PC-3 (cell line): ENCODE measurements at regions of chr17 and their contacts with region 1.

Region 1: DNA sequence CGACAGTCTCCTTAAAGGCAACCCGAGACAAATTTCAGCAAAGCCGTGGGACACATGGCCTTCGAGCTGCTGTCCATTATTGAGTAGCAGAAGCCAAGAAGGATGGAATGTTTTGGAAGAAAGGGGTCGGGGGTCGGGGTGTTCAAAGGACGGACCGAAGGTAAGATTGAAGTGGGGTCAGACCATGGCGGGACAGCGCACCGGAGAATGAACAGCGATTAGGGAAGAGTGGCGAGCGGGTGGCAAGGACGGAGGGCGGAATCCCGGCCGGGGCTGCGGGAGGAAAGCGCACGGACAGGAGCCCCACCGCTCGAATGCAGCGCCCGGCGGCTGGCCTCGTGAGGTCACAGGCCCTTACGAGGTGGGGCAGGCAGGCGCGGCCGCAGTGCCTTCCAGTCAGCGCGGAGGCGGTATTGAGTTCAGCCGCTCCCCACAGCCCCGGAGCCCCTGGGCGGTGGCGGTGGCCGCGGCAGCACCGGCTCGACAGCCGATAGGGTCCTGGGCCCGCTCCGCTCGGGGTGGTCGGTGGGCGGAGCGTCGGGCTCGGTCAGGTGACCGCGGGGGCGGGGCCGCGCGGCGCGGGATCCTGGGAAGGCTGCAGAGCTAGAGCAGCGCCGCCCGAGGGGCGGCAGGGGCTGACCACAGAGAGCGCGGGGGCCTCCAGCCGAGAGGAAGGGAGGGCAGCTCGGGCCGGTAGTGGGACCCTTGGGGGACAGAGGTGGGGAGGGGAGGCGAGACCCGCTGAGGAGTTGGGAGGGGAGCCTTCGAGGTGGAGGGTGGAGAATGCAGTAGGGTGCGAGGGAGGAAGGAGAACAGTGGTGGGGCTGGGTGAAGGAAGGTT is at the start of gene EFCAB13:
- DNase-seq: peak; percentile 95
- ATAC-seq: peak; percentile 94
- H3K4me3 ChIP-seq: peak within 1 kb of the TSS; percentile 94
- H3K27ac ChIP-seq: peak within 1 kb of the TSS; percentile 36
- H3K4me1 ChIP-seq: peaks cover 14% of the 10 kb centered on the region
- H3K27me3 ChIP-seq: no peaks in the 10 kb centered on the region
- CTCF ChIP-seq: peak; percentile 51
- total RNA-seq, gene EFCAB13: 1.2 and 2.7 TPM in 2 replicates

Region 2: GRCh38 chr17:47615766-47616424 is 292.3 kb after region 1 on chr17:
- CTCF ChIA-PET with region 1: interaction called, 3 read pairs
- POLR2A ChIA-PET with region 1: no interaction called
- intact Hi-C with region 1: loop called (anchors 5 kb)
- DNase-seq: peak; percentile 92
- ATAC-seq: peak; percentile 34
- H3K4me3 ChIP-seq: no peak overlapping the region
- H3K27ac ChIP-seq: no peak overlapping the region
- H3K4me1 ChIP-seq: peaks cover 28% of the 10 kb centered on the region
- H3K27me3 ChIP-seq: no peaks in the 10 kb centered on the region
- CTCF ChIP-seq: peak; percentile 97